Posterior vena cava (tissue), 2 donors: ENCODE measurements at regions of chr21 and their contacts with region 1.

Region 1: GRCh38 chr21:14567331-14568279 is 21.5 kb upstream of the SAMSN1 start:
- DNase-seq: no peak

Region 2: GRCh38 chr21:14487490-14488432 is 79.8 kb before region 1 on chr21:
- intact Hi-C with region 1: no loop called
- DNase-seq: no peak

Region 3: GRCh38 chr21:14497825-14498224 is 69.8 kb before region 1 on chr21:
- intact Hi-C with region 1: loop called in 1 of 2 experiments (anchors 2 kb)
- DNase-seq: no peak

Region 4: GRCh38 chr21:14825514-14825974 is 257.9 kb after region 1 on chr21:
- intact Hi-C with region 1: no loop called
- DNase-seq: no peak